ENCODE measurements at regions of chr3 and their contacts with region 1.

Region 1: GRCh38 chr3:129934234-129935123 is 40.0 kb upstream of the TRH start:
- DNase-seq: peak; percentile 20
- ATAC-seq: peak; percentile 64
- H3K4me3 Mint-ChIP-seq: no peak overlapping the region
- H3K27ac Mint-ChIP-seq: no peak overlapping the region
- H3K4me1 Mint-ChIP-seq: peaks cover 8% of the 10 kb centered on the region
- H3K27me3 Mint-ChIP-seq: peaks cover 4% of the 10 kb centered on the region
- CTCF ChIP-seq: peak; percentile 81

Region 2: DNA sequence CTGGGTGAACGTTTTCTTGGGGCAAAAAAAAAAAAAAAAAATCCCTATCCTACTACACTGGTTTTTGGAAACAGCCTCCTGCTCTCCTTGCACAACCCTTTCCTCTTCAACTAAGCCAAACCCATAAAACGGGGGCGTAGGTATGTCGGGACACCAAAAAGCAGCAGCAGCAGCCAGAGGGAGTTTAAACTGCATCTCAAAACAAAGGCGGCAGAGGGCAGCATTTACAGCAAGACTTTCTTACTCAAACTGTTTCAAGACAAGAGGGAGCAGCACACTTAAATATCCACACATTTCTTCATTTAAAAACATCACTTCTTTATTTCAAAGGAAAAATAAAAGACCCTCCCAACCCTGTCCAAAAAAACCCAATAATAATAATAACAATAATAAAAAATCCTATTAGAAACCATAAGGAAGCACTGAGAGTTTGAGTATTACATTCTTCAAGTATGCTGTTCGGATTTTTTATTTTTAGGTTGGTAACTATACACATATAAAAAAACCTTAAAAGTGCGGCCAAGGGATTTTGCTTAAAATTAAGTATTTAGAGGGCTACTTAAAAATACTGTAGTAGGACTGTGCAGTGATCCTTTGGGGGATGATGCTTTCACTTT is 284.1 kb before region 1 on chr3:
- CTCF ChIA-PET with region 1: interaction called, 3 read pairs
- POLR2A ChIA-PET with region 1: no interaction called
- intact Hi-C with region 1: loop called (anchors 1 kb)
- DNase-seq: no peak
- ATAC-seq: peak; percentile 47
- H3K4me3 Mint-ChIP-seq: no peak overlapping the region
- H3K27ac Mint-ChIP-seq: no peak overlapping the region
- H3K4me1 Mint-ChIP-seq: peaks cover 2% of the 10 kb centered on the region
- H3K27me3 Mint-ChIP-seq: no peaks in the 10 kb centered on the region
- CTCF ChIP-seq: no peak

Region 3: DNA sequence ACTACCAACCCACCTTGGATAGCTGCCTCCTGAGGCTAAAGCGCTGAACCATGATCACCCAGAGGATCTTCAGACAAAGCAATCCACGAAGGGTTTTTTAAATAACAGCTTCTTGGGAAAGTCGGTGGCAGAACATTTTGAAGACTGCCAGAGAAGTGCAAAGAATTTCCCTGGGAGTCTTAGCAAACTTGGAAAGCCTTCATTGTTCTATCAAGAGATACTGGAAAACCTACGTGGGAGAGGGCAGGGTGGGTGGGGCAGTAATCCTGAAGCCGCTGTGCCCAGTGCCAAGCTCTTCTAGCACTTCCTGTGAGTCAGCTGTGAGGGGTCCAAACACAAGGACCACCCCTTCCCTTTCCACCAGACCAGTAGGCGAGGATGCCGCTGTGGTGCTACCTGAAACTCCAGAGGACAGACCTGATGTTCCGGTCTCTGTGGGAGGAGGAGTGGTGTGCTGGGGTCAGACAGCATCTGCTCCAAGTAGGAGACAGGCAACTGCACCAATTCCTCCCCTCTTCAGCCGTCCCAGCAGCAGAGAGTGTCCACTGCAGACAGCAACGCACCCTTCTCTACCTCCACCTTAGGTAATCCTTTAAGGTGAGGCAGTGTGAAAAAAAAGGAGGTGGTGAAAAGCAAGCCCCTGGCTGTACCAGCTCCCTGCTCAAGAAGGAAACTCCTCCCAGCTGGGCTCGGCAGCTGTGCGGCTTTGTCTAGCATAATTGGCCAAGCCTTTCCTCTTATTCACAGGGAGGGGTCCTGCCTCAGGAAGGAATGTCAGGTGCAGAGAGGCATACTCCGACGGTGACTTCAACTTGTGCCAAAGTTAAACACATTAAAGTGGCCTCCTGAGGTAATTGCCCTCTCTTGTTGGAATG is 139.9 kb before region 1 on chr3:
- CTCF ChIA-PET with region 1: no interaction called
- POLR2A ChIA-PET with region 1: no interaction called
- intact Hi-C with region 1: no loop called
- DNase-seq: no peak
- ATAC-seq: no peak
- H3K4me3 Mint-ChIP-seq: peak overlapping the region; percentile 16
- H3K27ac Mint-ChIP-seq: no peak overlapping the region
- H3K4me1 Mint-ChIP-seq: peaks cover 19% of the 10 kb centered on the region
- H3K27me3 Mint-ChIP-seq: no peaks in the 10 kb centered on the region
- CTCF ChIP-seq: no peak